Cardiac septum (tissue), 1 donor: ENCODE measurements at regions of chr1 and their contacts with region 1.

Region 1: GRCh38 chr1:231584921-231585320 is 41.7 kb upstream of the DISC1 start:
- DNase-seq: no peak

Region 2: GRCh38 chr1:231467986-231468385 is 116.9 kb before region 1 on chr1:
- intact Hi-C with region 1: no loop called
- DNase-seq: no peak

Region 3: DNA sequence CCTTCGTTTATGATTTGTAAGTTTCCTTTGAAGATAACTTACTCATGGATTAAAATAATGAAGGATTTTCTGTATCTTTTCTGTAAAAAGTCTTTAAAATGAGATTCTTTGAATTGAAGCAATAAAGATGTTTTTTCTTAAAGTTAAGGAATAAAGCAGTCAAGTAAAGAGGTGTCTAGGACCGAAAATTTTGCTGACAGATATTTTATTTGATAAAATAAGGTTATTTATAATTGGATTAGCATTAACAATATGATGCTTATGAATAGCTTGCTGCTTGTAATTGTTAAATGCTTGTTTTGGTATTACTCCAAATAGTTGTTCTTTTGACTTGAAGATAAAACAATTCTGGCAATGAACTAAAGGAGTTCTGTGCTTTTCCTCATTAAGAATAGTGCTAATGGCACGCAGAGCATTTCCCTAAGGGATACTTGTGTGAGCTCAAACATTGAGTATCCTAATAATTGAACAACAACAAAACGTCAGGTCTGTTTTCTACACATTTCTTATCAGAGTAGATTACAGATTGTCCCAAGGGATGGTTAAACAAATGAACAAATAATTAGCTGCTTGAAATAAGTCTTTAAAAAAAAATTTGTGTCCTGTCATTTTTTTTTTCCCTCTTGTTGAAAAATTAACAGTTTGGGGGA is 39.9 kb before region 1 on chr1:
- intact Hi-C with region 1: loop called (anchors 5 kb)
- DNase-seq: no peak

Region 4: DNA sequence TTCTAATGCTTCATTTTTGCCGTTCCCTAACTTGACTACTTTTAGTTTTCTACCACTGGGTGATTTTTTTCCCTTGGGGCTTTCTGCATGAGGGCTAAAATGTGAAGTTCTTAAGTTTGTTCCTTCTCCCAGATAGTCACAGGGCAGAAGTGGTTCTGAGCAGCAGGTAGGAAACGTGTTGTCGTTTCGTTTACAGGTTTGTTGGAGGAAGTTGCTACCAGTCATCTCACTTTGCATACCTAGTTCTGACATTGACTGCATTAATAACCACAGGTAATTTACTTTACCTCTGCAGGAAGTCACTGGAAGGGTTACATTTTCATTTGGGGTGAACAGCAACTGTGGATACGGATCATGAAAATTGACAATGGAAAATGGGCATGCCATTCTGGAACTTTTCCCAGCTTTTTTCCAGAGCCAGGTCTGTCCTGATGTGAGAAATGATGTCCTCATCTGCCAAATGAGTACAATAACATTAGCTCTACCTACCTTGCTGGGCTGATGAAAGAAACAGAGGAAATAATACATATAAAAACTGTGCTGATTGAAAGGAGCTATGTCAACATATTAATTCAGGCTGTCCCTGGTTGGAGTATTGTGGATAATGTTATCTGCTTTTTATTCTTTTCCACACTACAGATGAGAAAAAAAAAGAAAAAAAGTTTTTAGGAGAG is 135.9 kb after region 1 on chr1:
- intact Hi-C with region 1: no loop called
- DNase-seq: no peak